Calu3 (cell line): ENCODE measurements at regions of chr15 and their contacts with region 1.

Region 1: DNA sequence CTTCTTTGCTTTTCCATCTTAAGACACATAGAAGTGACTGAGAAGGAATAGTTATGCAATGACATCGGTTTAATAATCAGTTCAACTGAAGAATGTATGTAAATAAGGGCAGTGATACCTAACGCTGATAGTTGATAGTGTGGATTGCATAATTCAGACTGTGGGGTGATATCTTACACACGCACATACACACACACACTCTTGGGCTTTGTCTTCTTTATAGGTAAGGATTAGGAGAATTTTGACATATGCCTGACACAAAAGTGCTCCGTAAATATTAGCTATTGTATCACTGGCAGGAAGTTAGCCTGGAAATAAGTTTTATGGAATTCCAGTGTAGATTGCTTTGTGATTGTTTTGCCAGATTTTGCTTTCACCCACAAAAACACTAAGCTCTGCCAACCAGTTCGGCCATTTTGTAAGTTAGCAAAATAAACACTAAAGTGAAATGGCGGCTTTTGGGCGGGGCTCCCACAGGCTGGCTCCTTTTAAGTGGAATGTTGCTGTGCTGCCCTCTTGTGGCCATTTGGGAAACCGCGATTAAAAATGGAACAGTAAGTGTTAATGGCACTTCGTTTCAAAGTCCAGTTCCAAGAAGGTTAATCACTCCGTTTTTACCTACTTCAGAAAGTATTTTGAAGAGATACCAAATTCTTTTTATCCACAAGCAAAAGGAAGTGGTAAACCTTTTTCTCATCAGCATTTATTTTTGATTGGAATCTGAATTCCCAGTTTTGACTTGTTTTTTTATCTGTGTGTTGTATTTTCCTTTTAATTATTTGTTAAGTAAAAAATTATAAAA is 17.7 kb downstream of the CHD2 start:
- DNase-seq: peak; percentile 93
- H3K4me3 Mint-ChIP-seq: peak overlapping the region; percentile 59
- H3K27ac Mint-ChIP-seq: peak overlapping the region; percentile 85
- H3K4me1 Mint-ChIP-seq: peaks cover 78% of the 10 kb centered on the region
- H3K27me3 Mint-ChIP-seq: no peaks in the 10 kb centered on the region
- CTCF ChIP-seq: peak; percentile 81

Region 2: GRCh38 chr15:92797168-92797951 is 120.4 kb before region 1 on chr15:
- CTCF ChIA-PET with region 1: interaction called, 24 read pairs
- intact Hi-C with region 1: loop called (anchors 1 kb)
- DNase-seq: peak; percentile 79
- H3K4me3 Mint-ChIP-seq: no peak overlapping the region
- H3K27ac Mint-ChIP-seq: peak overlapping the region; percentile 24
- H3K4me1 Mint-ChIP-seq: peaks cover 23% of the 10 kb centered on the region
- H3K27me3 Mint-ChIP-seq: no peaks in the 10 kb centered on the region
- CTCF ChIP-seq: peak; percentile 31

Region 3: DNA sequence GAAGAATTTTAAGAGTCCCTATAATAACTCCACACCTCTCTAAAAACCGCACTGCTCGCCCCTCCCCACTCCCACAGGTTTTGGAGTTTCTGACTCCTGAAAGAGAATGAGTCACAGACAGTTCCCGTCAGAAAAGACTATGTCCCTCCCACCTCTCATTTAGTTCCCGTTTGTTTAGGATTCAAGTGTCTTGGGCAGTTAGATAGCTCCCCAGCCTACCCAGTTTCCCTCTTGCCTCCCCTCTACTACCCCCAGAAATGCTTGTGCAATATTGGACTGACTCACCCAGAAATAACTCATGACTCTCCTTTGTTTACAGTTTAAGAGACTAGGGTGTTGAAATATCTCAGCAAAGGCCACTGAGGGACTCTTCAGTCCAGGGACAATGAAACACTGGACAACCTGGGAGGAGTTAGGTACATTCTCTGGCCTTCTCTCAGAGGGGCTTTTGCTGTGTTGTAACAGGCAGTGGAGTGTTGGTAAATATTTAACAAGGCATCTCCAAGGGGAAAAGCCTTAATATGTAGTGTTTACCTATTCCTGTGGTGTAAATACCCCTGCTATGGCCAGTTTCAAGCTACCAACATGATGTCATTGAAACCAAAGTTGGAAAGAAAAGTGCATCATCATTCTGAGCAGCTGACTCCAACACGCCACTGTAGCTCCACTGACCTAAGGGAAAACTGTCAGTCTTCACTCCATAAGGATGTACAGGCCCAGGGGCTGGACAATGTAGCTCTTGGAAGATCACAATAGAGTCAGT is 113.8 kb before region 1 on chr15:
- CTCF ChIA-PET with region 1: interaction called, 19 read pairs
- intact Hi-C with region 1: loop called (anchors 1 kb)
- DNase-seq: peak; percentile 95
- H3K4me3 Mint-ChIP-seq: peak overlapping the region; percentile 17
- H3K27ac Mint-ChIP-seq: peak overlapping the region; percentile 88
- H3K4me1 Mint-ChIP-seq: peaks cover 34% of the 10 kb centered on the region
- H3K27me3 Mint-ChIP-seq: no peaks in the 10 kb centered on the region
- CTCF ChIP-seq: no peak